Mammary epithelial cell (primary cell): ENCODE measurements at regions of chr13 and their contacts with region 1.

Region 1: GRCh38 chr13:44719857-44720671 is 143.9 kb upstream of the TSC22D1 start:
- DNase-seq: no peak
- H3K4me3 ChIP-seq: no peak overlapping the region
- H3K27ac ChIP-seq: no peak overlapping the region
- H3K4me1 ChIP-seq: peaks cover 28% of the 10 kb centered on the region
- H3K27me3 ChIP-seq: no peaks in the 10 kb centered on the region
- CTCF ChIP-seq: no peak

Region 2: GRCh38 chr13:43572656-43573367 is 1147.3 kb before region 1 on chr13:
- CTCF ChIA-PET with region 1: no interaction called
- dilution Hi-C with region 1: no loop called
- in situ Hi-C with region 1: no loop called
- intact Hi-C with region 1: no loop called
- DNase-seq: peak; percentile 69
- H3K4me3 ChIP-seq: no peak overlapping the region
- H3K27ac ChIP-seq: peak overlapping the region; percentile 63
- H3K4me1 ChIP-seq: peaks cover 25% of the 10 kb centered on the region
- H3K27me3 ChIP-seq: no peaks in the 10 kb centered on the region
- CTCF ChIP-seq: no peak

Region 3: GRCh38 chr13:44770951-44771350 is 50.9 kb after region 1 on chr13:
- CTCF ChIA-PET with region 1: no interaction called
- dilution Hi-C with region 1: loop called (anchors 5 kb)
- in situ Hi-C with region 1: no loop called
- intact Hi-C with region 1: no loop called
- DNase-seq: no peak
- H3K4me3 ChIP-seq: no peak overlapping the region
- H3K27ac ChIP-seq: no peak overlapping the region
- H3K4me1 ChIP-seq: peaks cover 11% of the 10 kb centered on the region
- H3K27me3 ChIP-seq: no peaks in the 10 kb centered on the region
- CTCF ChIP-seq: no peak

Region 4: DNA sequence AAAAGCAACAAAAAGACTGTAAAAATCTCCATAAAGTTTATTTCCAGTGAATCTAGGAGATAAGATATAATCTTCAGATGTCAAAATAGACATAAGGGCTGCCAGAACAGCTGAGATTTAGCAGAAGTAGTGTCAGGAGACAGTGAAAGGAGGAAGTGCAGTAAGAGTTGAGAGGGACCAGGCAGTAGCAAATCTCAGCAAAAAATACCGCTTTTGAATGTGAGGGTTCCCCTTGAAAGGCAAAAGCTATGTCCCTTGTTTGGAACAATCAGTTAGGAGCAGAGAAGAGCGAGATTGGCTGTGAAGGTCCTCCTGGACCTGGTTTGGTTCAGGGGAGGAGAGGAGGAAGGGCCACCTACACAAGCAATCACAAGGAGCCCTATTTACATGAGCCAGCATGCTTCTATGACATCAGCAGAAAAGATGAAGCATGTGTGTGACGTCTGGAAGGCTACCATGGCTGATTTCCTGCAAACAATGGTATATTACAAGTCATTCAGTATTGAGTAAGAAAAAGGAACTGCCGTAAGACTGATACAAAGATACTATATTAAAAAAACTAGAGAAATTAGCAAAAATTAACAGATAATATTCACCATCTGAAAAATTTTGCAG is 1230.4 kb after region 1 on chr13:
- CTCF ChIA-PET with region 1: no interaction called
- dilution Hi-C with region 1: no loop called
- in situ Hi-C with region 1: no loop called
- intact Hi-C with region 1: no loop called
- DNase-seq: no peak
- H3K4me3 ChIP-seq: no peak overlapping the region
- H3K27ac ChIP-seq: no peak overlapping the region
- H3K4me1 ChIP-seq: no peaks in the 10 kb centered on the region
- H3K27me3 ChIP-seq: no peaks in the 10 kb centered on the region
- CTCF ChIP-seq: no peak